OCI-LY7 (cell line): ENCODE measurements at regions of chr15 and their contacts with region 1.

Region 1: DNA sequence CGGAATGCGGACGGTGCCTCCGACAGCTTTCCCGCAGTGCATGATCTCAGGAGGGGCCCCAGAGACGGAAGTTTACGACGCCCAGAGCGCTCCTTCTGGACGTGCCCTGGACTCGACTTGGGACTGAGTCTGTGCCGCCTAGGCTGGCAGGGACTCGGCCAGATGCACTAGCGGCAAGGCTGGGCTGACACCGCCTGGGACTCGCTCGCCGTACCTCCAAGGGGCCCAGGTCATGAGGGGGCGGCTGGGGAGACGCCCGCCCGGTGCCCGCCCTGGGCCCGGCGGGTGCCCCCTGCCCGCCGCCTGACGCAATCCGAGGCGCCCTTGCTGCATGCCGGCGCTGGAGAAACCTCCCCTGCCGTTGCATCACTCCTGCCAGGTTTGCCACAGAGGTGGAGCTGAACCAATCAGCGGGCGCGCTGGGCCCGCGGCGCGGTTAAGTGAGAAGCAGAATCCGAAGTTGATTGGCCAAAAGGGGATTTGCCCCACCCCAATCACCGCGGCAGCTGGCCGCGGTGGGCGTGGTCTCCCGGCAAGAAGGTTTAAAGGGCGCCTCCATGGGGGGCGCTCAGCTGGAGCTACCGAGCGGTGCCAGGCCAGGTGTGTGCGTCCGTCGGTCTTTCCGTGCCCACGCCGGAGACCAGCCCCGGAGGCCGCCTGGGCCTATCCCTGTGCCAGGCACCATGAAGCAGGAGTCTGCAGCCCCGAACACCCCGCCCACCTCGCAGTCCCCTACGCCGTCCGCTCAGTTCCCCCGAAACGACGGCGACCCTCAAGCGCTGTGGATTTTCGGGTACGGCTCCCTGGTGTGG is at the start of gene CHAC1:
- DNase-seq: peak; percentile 99
- H3K4me3 ChIP-seq: peak within 1 kb of the TSS; percentile 83
- H3K27ac ChIP-seq: peak within 1 kb of the TSS; percentile 69
- H3K4me1 ChIP-seq: peaks cover 26% of the 10 kb centered on the region
- CTCF ChIP-seq: peak; percentile 19; the same call in 1 of the 2 replicates
- total RNA-seq, gene CHAC1: 40.4 and 41.4 TPM in 2 replicates

Region 2: GRCh38 chr15:40857601-40858341 is 95.3 kb before region 1 on chr15:
- CTCF ChIA-PET with region 1: no interaction called
- POLR2A ChIA-PET with region 1: interaction called, 5 read pairs
- intact Hi-C with region 1: loop called (anchors 5 kb)
- DNase-seq: peak; percentile 77
- H3K4me3 ChIP-seq: no peak overlapping the region
- H3K27ac ChIP-seq: no peak overlapping the region
- H3K4me1 ChIP-seq: peaks cover 22% of the 10 kb centered on the region
- CTCF ChIP-seq: peak; percentile 97

Region 3: DNA sequence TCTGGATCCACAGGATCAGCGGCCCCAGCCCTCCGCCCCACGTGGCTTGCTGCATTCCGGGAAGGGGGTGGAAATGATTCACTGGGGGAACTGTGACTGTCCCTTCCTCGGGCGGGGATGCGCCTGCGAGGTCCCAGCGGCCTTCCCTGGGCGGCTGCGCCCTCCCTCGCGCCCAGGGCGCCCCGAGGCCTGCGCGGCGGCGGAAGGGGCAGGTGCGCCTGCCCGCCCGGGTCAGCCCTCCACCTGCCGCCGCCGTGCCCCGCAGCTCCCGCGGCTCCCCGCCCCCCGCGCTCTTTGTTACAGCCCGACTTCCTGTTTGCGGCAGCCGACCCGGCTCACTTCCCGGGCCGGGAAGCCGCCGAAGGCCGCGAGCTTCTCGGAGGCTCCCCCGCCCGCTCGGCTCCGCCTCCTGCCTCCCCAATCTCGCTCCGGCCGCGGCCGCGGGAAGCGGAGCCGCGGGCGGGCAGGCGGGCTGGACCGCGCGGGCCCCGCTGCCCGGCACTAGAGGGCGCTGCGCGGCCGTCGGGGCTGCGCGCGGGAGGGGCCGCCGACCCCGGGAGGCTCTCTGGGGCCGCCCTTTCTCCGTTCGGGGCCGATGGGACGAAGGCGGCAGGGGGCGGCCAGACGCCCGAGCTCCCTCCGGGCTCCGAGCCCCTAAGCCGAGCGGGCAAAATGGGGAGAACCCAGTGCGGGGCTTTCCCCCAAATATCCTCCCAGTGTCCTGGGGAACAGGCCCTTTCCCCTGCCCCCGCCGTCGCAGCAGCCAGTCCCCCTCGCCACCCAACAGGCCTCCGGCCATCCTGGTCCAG is 11.4 kb before region 1 on chr15:
- CTCF ChIA-PET with region 1: interaction called, 3 read pairs
- POLR2A ChIA-PET with region 1: interaction called, 36 read pairs
- intact Hi-C with region 1: no loop called
- DNase-seq: peak; percentile 86
- H3K4me3 ChIP-seq: peak overlapping the region; percentile 68
- H3K27ac ChIP-seq: peak overlapping the region; percentile 18
- H3K4me1 ChIP-seq: peaks cover 47% of the 10 kb centered on the region
- CTCF ChIP-seq: peak; percentile 61

Region 4: DNA sequence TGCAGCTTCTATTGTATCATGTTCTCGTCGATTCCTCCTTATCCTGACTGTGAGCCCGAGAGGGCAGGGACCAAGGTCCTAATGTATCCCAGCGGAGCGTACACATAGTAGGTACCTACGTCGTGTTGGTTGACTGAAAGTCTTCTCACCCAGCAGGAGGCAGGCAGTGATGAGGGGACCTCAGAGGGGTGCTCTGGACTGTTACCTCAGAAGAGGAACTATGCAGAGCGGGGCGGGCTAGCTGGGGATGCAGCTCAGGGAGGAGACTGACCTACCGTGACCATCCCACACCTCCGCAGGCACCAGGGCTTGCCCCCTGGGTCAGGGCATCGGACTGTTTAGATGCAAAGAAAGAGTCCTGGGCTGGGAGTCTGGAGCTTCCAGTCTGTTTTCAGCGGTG is 11.5 kb after region 1 on chr15:
- CTCF ChIA-PET with region 1: interaction called, 3 read pairs
- POLR2A ChIA-PET with region 1: interaction called, 25 read pairs
- intact Hi-C with region 1: no loop called
- DNase-seq: no peak
- H3K4me3 ChIP-seq: no peak overlapping the region
- H3K27ac ChIP-seq: no peak overlapping the region
- H3K4me1 ChIP-seq: no peaks in the 10 kb centered on the region
- CTCF ChIP-seq: no peak